CD8-positive, alpha-beta T cell (primary cell): ENCODE measurements at regions of chr13 and their contacts with region 1.

Region 1: GRCh38 chr13:61294467-61295191 is 121.0 kb downstream of the PCDH20 start:
- DNase-seq: no peak
- ATAC-seq: no peak
- H3K4me3 ChIP-seq: no peak overlapping the region
- H3K4me3 Mint-ChIP-seq: no peak overlapping the region
- H3K27ac ChIP-seq: no peak overlapping the region
- H3K27ac Mint-ChIP-seq: no peak overlapping the region
- H3K4me1 ChIP-seq: no peaks in the 10 kb centered on the region
- H3K4me1 Mint-ChIP-seq: no peaks in the 10 kb centered on the region
- H3K27me3 ChIP-seq: no peaks in the 10 kb centered on the region
- H3K27me3 Mint-ChIP-seq: no peaks in the 10 kb centered on the region
- CTCF ChIP-seq: no peak

Region 2: DNA sequence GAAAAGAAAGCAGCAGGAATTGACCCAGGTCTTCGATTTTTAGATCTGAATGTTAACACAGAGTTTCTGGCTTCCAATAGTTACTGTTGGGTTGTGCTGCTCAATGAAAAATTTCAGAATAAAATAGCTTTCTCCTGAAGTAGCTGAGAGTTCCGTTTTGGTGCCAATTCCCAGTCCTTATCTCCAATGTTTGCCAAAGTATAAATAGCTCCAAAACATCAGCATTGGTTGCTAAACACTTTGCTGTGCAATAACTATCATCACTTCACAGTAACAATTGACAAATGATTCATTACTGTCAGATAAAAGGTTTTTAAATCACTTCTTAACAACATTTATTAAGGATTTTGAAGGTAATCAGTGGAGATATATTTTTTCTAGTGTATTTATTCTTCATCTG is 325.0 kb before region 1 on chr13:
- CTCF ChIA-PET with region 1: no interaction called
- POLR2A ChIA-PET with region 1: no interaction called
- intact Hi-C with region 1: no loop called
- DNase-seq: no peak
- ATAC-seq: no peak
- H3K4me3 ChIP-seq: no peak overlapping the region
- H3K4me3 Mint-ChIP-seq: no peak overlapping the region
- H3K27ac ChIP-seq: no peak overlapping the region
- H3K27ac Mint-ChIP-seq: no peak overlapping the region
- H3K4me1 ChIP-seq: no peaks in the 10 kb centered on the region
- H3K4me1 Mint-ChIP-seq: no peaks in the 10 kb centered on the region
- H3K27me3 ChIP-seq: no peaks in the 10 kb centered on the region
- H3K27me3 Mint-ChIP-seq: no peaks in the 10 kb centered on the region
- CTCF ChIP-seq: no peak

Region 3: DNA sequence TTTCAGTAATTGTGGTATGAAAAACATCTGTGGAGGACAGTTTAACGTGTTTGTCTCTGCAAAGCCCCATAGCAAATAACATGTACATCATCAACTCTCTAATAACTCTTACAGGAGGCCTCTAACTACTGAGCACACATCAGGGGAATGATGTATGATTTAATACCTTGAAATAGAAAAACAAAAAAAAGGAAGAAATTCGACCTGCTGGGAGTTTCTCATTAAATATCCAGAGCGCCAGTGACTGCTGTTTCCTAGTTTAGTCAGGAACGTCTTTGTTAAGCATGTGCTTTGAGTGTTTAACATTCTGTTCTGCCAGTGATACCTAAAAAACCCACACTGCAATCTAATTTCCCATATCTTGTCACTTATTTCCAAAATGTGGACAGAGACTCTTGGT is 114.4 kb before region 1 on chr13:
- CTCF ChIA-PET with region 1: no interaction called
- POLR2A ChIA-PET with region 1: no interaction called
- intact Hi-C with region 1: no loop called
- DNase-seq: no peak
- ATAC-seq: no peak
- H3K4me3 ChIP-seq: no peak overlapping the region
- H3K4me3 Mint-ChIP-seq: no peak overlapping the region
- H3K27ac ChIP-seq: no peak overlapping the region
- H3K27ac Mint-ChIP-seq: no peak overlapping the region
- H3K4me1 ChIP-seq: no peaks in the 10 kb centered on the region
- H3K4me1 Mint-ChIP-seq: no peaks in the 10 kb centered on the region
- H3K27me3 ChIP-seq: no peaks in the 10 kb centered on the region
- H3K27me3 Mint-ChIP-seq: no peaks in the 10 kb centered on the region
- CTCF ChIP-seq: no peak

Region 4: GRCh38 chr13:61358599-61358998 is 64.0 kb after region 1 on chr13:
- CTCF ChIA-PET with region 1: no interaction called
- POLR2A ChIA-PET with region 1: no interaction called
- intact Hi-C with region 1: loop called in 1 of 2 experiments (anchors 10 kb)
- DNase-seq: no peak
- ATAC-seq: no peak
- H3K4me3 ChIP-seq: no peak overlapping the region
- H3K4me3 Mint-ChIP-seq: no peak overlapping the region
- H3K27ac ChIP-seq: no peak overlapping the region
- H3K27ac Mint-ChIP-seq: no peak overlapping the region
- H3K4me1 ChIP-seq: no peaks in the 10 kb centered on the region
- H3K4me1 Mint-ChIP-seq: no peaks in the 10 kb centered on the region
- H3K27me3 ChIP-seq: no peaks in the 10 kb centered on the region
- H3K27me3 Mint-ChIP-seq: no peaks in the 10 kb centered on the region
- CTCF ChIP-seq: no peak